Mucosa of descending colon (tissue), 3 donors: ENCODE measurements at regions of chr5 and their contacts with region 1.

Region 1: GRCh38 chr5:173217626-173218397 is 17.2 kb downstream of the NKX2-5 start:
- DNase-seq: no peak
- ATAC-seq: no peak
- H3K4me3 ChIP-seq: no peak overlapping the region
- H3K4me1 ChIP-seq: no peaks in the 10 kb centered on the region
- CTCF ChIP-seq: no peak

Region 2: DNA sequence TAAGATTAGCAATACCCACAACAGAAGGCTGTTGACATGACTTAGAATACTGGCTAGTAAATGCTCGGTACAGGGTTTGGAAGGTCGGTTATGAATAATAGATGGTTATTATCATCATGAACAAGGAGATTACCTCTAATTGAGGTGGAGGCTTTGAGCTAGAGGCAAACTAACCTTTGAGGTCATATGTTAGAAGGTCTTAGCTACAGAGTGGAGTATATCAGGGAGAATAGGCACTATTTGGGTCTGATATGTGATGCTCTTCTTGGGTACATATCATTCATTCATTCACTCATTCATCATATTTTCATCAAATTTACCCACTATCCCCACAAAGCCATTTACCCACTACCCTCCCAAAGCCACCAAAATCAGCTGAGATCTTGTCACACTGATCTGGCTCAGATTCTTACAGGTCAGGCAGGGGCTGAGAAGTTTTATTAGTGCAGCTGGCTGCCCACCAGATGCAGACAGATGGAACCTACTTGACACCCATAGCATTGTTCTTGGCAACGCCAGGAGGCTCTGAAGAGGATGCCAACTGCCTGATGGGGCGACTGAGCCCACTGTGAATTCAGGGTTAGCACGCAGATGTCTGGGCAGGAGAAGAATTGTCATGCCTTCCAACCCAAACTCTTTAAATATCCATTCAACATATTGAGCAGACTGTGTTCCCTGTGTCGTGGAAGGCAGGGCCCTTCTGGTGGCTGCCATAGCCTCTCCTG is 673.3 kb before region 1 on chr5:
- intact Hi-C with region 1: no loop called
- DNase-seq: no peak
- ATAC-seq: no peak
- H3K4me3 ChIP-seq: no peak overlapping the region
- H3K4me1 ChIP-seq: peaks cover 2% of the 10 kb centered on the region
- CTCF ChIP-seq: no peak

Region 3: GRCh38 chr5:173163219-173163618 is 54.6 kb before region 1 on chr5:
- intact Hi-C with region 1: loop called in 1 of 2 experiments (anchors 5 kb)
- DNase-seq: no peak
- ATAC-seq: no peak
- H3K4me3 ChIP-seq: no peak overlapping the region
- H3K4me1 ChIP-seq: no peaks in the 10 kb centered on the region
- CTCF ChIP-seq: no peak

Region 4: DNA sequence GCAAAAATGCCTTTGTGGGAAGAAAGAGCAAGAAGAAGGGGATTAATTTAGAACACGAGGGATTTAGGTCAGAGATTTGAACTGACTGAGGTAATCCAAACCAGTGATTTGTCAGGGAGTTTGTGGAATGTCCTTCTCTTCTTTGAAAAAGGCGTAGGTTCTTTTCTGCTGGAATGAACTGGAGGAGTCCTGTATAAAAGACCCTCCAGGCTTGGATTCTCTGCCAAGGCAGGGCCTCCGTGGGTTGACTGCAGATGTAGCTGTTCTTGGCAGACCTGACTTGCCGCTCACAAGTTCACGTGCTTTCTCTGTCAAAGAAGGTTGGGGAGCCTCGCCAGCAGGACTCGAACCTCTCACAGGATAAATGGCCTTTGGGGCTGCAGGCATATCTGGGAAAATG is 173.2 kb after region 1 on chr5:
- intact Hi-C with region 1: no loop called
- DNase-seq: no peak
- ATAC-seq: no peak
- H3K4me3 ChIP-seq: no peak overlapping the region
- H3K4me1 ChIP-seq: no peaks in the 10 kb centered on the region
- CTCF ChIP-seq: no peak